Head of caudate nucleus (tissue), 42 donors: ENCODE measurements at regions of chr12 and their contacts with region 1.

Region 1: DNA sequence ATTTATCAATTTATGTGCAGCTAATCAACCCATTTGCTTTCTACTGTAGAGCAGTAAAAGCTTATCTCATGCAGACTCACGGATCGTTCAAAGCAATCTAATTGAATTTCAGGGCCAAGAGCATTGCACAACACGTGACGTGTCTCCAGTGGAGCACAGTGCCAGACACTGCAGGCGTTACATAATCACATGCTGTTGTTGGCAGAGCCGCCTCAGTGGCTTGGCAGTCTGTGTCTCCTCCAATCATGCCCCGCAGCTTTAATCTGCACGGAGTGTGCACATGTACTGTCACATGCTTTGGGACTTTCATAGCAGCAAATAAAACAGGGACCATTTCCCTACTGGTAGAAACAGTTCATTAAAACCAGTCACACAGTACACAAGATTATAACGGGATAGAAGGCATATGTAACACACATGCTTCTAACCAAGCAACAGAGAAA is 309.3 kb downstream of the ITPR2 start:
- DNase-seq: peak; percentile 72 to 96 (median 88)

Region 2: GRCh38 chr12:26113853-26114719 is 409.6 kb before region 1 on chr12:
- intact Hi-C with region 1: loop called (anchors 5 kb)
- DNase-seq: peak; percentile 77 to 97 (median 92)

Region 3: DNA sequence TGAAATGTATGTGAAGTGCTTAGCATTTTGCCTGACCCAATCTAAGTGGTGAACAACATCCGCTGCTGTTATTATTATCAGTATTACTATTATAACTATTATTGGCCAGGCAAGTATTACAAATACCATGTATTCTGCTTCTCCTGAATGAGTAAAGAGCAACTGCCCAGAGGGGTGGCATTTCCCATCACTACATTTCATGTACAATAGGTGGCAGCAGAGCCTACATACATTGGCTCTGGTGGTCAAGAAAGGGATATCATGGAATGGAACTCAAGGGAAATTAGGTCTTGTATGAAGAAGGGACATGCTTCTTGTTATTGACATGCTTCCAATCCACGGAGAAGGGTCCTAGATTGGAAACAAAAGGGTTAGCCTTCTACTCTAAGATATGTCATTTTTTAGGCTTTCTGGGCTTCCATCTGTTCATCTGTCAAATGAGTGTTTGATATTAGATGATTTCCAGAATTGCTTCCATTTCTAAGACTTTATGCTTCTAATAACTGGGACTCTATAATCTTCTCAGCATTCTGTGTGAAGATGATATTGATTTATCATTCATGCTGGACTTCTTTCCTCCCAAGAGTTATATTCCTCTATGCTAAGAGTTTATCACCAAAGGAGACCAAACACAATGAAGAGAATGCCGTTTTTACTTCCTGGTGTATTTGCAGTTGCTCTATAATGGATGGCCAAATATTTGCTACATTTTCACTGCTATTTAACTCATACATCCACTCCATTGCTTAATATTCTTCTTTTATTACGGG is 89.2 kb before region 1 on chr12:
- intact Hi-C with region 1: loop called (anchors 10 kb)
- DNase-seq: peak in 24 of 42 donors; percentile 10 to 73 (median 24)

Region 4: DNA sequence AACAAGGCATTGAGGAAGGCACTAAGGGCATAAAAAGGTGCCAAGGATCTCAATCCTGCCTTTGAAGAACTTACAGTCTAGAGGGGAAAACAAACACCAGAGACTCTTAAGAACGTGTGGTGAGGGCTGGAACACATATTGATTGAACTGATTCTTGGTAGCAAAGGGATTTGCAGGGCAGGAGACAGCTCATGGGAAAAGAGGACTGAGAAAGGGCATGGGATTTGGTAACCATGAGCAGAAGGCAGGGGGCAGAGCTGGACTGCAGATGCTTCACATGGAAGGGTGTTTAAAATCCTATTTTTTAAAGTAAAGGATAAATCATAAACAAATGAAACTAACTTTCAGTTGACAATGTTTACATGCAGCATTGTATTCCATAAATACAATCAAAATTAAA is 106.1 kb after region 1 on chr12:
- intact Hi-C with region 1: loop called (anchors 10 kb)
- DNase-seq: peak in 32 of 42 donors; percentile 20 to 83 (median 52)